ENCODE measurements at regions of chr11 and their contacts with region 1.

Region 1: DNA sequence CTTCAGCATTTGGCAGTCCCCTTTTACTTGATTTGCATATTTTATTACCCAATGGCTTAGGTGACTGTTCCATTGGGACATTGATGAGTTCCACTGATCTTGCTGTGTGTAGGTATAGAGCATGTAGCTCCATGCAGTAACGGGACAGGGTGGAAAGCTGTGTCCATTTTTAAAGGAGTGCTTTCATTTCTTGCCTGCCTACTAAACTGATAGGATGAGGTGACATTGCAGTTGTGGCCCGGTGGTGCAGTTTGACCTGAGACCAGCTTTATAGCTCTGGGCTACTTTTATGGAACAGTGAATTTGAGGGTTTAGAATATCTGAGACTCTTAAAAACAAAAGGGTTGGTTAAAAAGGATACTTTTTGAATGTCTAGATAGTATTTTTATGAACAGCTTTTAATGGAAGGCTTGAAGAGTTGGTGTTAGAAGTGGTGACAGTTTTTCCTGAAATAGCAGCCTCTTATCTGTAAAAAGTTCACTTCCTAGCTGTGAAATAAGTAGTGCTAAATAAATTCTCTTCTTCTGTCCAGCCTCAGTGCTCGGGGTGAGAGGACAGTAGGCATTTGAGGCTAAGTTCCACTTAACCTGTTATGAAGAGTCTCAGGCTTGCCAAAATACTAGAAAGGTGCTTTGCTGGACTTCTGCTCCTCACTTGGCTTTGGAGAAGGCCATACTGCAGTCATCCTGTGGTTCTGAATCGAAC is 27.0 kb downstream of the NAT10 start:
- DNase-seq: no peak
- H3K4me3 ChIP-seq: no peak overlapping the region
- H3K27ac ChIP-seq: no peak overlapping the region
- H3K4me1 ChIP-seq: no peaks in the 10 kb centered on the region
- H3K27me3 ChIP-seq: no peaks in the 10 kb centered on the region
- CTCF ChIP-seq: no peak
- EP300 ChIP-seq: no peak
- POLR2A ChIP-seq: no peak
- RAD21 ChIP-seq: no peak

Region 2: GRCh38 chr11:33682446-33682845 is 450.0 kb before region 1 on chr11:
- CTCF ChIA-PET with region 1: no interaction called
- POLR2A ChIA-PET with region 1: no interaction called
- DNase-seq: no peak
- H3K4me3 ChIP-seq: no peak overlapping the region
- H3K27ac ChIP-seq: no peak overlapping the region
- H3K4me1 ChIP-seq: peaks cover 0 to 9% (median 4%) of the 10 kb centered on the region in 4 experiments; a peak in 4 of 7 replicates
- H3K27me3 ChIP-seq: no peaks in the 10 kb centered on the region
- CTCF ChIP-seq: peak; percentile 27 to 49 (median 31); a peak in 3 of 4 replicates
- EP300 ChIP-seq: no peak
- POLR2A ChIP-seq: no peak
- RAD21 ChIP-seq: peak; percentile 63 to 67

Region 3: DNA sequence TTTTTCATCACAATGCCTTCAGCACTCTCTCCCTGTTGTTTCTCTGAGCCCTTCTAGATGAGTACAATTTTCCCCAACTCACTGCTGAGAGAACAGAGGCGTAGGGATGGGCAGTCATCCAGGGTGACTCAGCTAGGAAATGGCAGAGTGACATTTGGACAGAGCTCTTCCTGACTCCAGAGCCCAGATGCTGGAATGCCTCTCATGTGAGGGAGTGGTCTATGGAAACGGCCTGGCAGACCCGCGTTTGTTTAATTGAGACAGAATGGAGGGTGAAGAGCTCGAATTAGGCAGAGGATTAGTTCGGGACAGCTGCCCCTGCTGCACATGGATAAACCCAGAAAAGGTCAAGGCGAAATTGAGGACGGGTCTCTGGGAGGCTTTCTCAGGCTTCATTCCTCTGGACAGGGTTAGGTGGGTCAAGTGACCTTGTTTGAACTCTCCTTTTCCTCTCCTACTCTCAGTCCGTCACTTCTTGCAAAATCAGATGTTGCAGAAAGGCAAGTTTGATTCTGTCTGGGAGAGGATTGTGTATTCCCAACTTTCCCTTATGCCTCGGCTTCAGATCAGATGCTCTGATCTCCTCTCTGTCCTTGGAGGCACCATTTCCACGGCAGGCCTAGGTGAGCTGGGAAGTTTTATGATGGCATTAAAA is 232.9 kb before region 1 on chr11:
- CTCF ChIA-PET with region 1: no interaction called
- POLR2A ChIA-PET with region 1: no interaction called
- DNase-seq: no peak
- H3K4me3 ChIP-seq: no peak overlapping the region
- H3K27ac ChIP-seq: no peak overlapping the region
- H3K4me1 ChIP-seq: 0 out of 7 replicates have a peak, but pooled peaks cover 0 to 2% (median 0%) of the 10 kb centered on the region in 4 experiments
- H3K27me3 ChIP-seq: no peaks in the 10 kb centered on the region
- CTCF ChIP-seq: no peak
- EP300 ChIP-seq: no peak
- POLR2A ChIP-seq: no peak
- RAD21 ChIP-seq: no peak

Region 4: GRCh38 chr11:33987975-33988580 is 144.3 kb before region 1 on chr11:
- CTCF ChIA-PET with region 1: no interaction called
- POLR2A ChIA-PET with region 1: no interaction called
- DNase-seq: peak in 1 of 2 experiments; percentile 80
- H3K4me3 ChIP-seq: no peak overlapping the region
- H3K27ac ChIP-seq: no peak overlapping the region
- H3K4me1 ChIP-seq: no peaks in the 10 kb centered on the region
- H3K27me3 ChIP-seq: no peaks in the 10 kb centered on the region
- CTCF ChIP-seq: peak; percentile 79 to 94 (median 91)
- EP300 ChIP-seq: no peak
- POLR2A ChIP-seq: no peak
- RAD21 ChIP-seq: peak; percentile 82 to 91

Region 5: GRCh38 chr11:34143048-34143447 is 10.6 kb after region 1 on chr11:
- CTCF ChIA-PET with region 1: interaction called, 3 read pairs
- POLR2A ChIA-PET with region 1: interaction called, 23 read pairs
- DNase-seq: no peak
- H3K4me3 ChIP-seq: no peak overlapping the region
- H3K27ac ChIP-seq: no peak overlapping the region
- H3K4me1 ChIP-seq: no peaks in the 10 kb centered on the region
- H3K27me3 ChIP-seq: no peaks in the 10 kb centered on the region
- CTCF ChIP-seq: no peak
- EP300 ChIP-seq: no peak
- POLR2A ChIP-seq: no peak
- RAD21 ChIP-seq: no peak

Region 6: DNA sequence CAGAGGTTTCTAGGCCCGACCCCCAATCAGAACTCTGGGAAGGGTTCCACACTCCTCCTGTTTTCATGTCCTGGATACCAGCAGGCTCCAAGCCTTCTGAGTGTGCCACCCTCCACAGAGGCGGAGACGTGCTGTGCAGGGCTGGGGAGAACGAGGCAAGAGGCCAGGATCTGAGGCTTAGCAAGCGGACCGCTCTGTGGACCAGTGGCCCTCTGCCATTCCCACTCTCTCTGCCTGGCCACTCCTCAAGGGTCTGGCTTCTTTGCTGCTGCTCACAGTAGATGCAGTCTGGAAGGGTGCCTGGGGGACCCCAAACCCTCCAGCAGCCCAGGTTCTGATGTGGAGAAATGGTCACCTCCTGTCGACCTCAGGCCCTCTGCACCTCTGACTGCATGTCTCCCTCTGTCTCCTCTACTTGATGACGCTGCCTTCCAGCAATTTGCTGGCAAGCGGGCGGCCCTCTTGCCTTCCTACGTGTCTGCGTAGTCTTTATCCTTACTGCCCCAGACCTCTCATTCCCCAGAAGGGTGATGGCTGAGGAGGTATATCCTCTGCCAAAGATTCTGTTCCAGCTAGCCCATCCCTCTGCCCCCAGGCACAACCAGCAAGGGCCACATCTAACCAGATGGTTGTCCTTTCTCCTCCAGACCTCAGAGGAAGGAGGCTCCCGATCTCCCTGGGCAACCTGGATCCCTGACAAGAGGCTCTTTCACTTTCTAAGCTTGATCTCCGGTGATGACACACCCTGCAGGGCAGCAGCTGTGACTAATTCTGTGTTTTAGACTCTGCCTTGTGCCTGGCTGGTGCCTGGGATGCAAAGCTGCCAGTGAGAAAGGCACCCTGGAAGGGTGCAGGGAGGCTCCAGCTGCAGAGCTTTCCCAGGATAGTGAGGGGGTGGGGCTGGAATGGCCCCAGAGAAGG is 60.3 kb after region 1 on chr11:
- CTCF ChIA-PET with region 1: no interaction called
- POLR2A ChIA-PET with region 1: no interaction called
- DNase-seq: no peak
- H3K4me3 ChIP-seq: no peak overlapping the region
- H3K27ac ChIP-seq: no peak overlapping the region
- H3K4me1 ChIP-seq: peaks cover 8 to 24% (median 11%) of the 10 kb centered on the region in 4 experiments
- H3K27me3 ChIP-seq: no peaks in the 10 kb centered on the region
- CTCF ChIP-seq: no peak
- EP300 ChIP-seq: no peak
- POLR2A ChIP-seq: no peak
- RAD21 ChIP-seq: no peak